T-cell (primary cell): ENCODE measurements at regions of chr15 and their contacts with region 1.

Region 1: DNA sequence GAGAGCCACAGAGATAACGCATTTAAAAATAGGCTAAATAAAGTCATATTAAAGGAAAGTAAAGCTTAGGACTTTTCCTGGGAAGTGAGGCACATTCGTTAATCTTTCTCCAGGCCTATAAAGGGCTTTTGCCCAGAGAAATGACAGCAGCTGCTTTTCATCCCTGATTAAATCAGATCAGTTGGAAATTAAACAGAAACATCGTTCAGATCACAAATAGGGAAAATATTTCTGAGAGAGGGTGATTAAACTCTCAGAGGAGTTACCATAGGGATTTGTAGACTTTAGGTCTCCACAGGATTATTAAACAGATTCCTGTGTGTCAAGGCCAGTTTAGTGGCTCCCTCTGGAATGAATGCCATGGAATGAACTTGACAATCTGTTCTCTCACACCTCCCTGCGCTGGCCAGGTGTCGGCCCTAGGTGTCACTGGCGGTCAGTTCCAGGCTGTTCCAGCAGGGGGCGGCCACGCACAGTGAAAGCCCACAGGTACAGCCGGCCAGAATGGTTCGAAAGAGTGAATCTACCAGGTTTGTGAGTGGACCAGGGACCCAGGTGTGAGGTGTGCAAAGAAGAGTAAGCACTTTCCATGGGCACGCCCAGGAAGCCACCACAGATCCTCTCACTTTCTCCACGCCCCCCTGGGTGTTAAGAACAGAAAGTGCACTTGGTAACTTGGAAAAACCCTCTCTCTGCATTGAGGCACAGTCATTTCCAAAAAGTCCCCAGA is 253.0 kb upstream of the RASGRP1 start:
- DNase-seq: peak; percentile 46 to 84 (median 76)
- ATAC-seq: peak; percentile 93 to 96 (median 94)
- H3K4me3 ChIP-seq: no peak overlapping the region
- H3K4me3 Mint-ChIP-seq: no peak overlapping the region
- H3K27ac ChIP-seq: no peak overlapping the region
- H3K27ac Mint-ChIP-seq: no peak overlapping the region
- H3K4me1 ChIP-seq: peaks cover 0 to 4% of the 10 kb centered on the region in 2 experiments
- H3K4me1 Mint-ChIP-seq: peaks cover 0 to 4% (median 2%) of the 10 kb centered on the region in 3 donors
- H3K27me3 ChIP-seq: no peaks in the 10 kb centered on the region
- H3K27me3 Mint-ChIP-seq: peaks cover 0 to 20% of the 10 kb centered on the region in 2 donors

Region 2: GRCh38 chr15:38438031-38438986 is 379.3 kb before region 1 on chr15:
- CTCF ChIA-PET with region 1: no interaction called
- POLR2A ChIA-PET with region 1: no interaction called
- DNase-seq: no peak
- ATAC-seq: no peak
- H3K4me3 ChIP-seq: no peak overlapping the region
- H3K4me3 Mint-ChIP-seq: no peak overlapping the region
- H3K27ac ChIP-seq: no peak overlapping the region
- H3K27ac Mint-ChIP-seq: no peak overlapping the region
- H3K4me1 ChIP-seq: peaks cover 0 to 5% of the 10 kb centered on the region in 2 experiments
- H3K4me1 Mint-ChIP-seq: peaks cover 5 to 9% (median 8%) of the 10 kb centered on the region in 3 donors
- H3K27me3 ChIP-seq: peaks cover 0 to 2% of the 10 kb centered on the region in 2 experiments
- H3K27me3 Mint-ChIP-seq: peaks cover 21 to 33% of the 10 kb centered on the region in 2 donors

Region 3: GRCh38 chr15:38843736-38844590 is 26.4 kb after region 1 on chr15:
- CTCF ChIA-PET with region 1: interaction called, 3 to 14 read pairs
- POLR2A ChIA-PET with region 1: no interaction called
- DNase-seq: no peak
- ATAC-seq: no peak
- H3K4me3 ChIP-seq: no peak overlapping the region
- H3K4me3 Mint-ChIP-seq: no peak overlapping the region
- H3K27ac ChIP-seq: no peak overlapping the region
- H3K27ac Mint-ChIP-seq: no peak overlapping the region
- H3K4me1 ChIP-seq: no peaks in the 10 kb centered on the region
- H3K4me1 Mint-ChIP-seq: peaks cover 0 to 4% (median 0%) of the 10 kb centered on the region in 3 donors
- H3K27me3 ChIP-seq: peaks cover 0 to 6% of the 10 kb centered on the region in 2 experiments
- H3K27me3 Mint-ChIP-seq: peaks cover 16 to 37% of the 10 kb centered on the region in 2 donors